ENCODE measurements at regions of chr3 and their contacts with region 1.

Region 1: DNA sequence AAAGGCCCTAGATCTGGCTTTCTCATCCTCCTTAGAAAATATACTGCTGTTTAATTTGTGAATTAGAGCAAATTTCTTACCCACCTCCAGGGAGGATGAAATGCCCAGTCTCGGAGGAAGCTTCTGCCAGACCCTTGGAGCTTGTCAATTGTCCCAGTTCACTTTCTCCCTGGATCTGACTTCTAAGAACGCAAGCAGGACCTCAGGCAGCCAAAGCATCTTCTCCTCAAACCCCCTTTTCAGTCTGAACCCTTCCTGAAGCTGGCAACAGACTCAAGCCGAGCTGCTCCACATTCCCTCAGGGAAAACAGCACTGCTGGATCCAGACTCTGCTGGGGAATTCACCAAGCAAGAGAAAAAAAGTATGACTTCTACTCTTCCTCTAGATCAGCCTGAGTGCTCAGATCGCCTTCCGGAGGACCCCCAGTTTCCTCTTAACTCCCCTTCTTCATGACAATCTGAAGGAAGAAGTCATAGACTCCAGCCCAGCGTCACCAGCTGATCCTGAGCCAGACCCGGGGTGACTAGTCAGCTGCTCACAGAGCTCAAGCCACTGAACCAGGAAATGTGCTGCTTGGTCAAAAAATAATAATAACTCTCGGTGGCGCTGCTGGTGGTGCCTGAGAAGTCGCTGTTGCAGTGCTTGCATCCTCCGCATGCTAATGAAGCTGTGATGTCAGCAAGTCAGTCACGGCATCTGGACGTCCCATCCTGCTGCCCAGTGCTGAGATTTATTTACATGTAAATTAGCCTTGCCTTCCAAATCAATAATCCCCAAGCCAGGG is at the start of gene PRICKLE2:
- DNase-seq: peak; percentile 75 to 89
- ATAC-seq: peak; percentile 75 to 88 (median 84)
- H3K4me3 ChIP-seq: peak within 1 kb of the TSS in 9 of 10 donors; percentile 6 to 54 (median 47)
- H3K27ac ChIP-seq: peak within 1 kb of the TSS; percentile 27 to 89 (median 78)
- H3K4me1 ChIP-seq: peaks cover 11 to 80% (median 59%) of the 10 kb centered on the region in 9 donors
- H3K27me3 ChIP-seq: no peaks in the 10 kb centered on the region
- CTCF ChIP-seq: peak in 5 of 9 donors; percentile 16 to 54 (median 39)
- total RNA-seq, gene PRICKLE2: 6.4 to 12.2 (median 8.4) TPM

Region 2: GRCh38 chr3:64150623-64151207 is 74.3 kb before region 1 on chr3:
- intact Hi-C with region 1: loop called in 2 of 10 experiments (anchors 5 kb)
- DNase-seq: peak; percentile 65 to 67
- ATAC-seq: peak; percentile 91 to 97 (median 96)
- H3K4me3 ChIP-seq: no peak overlapping the region
- H3K27ac ChIP-seq: peak overlapping the region; percentile 41 to 82 (median 68)
- H3K4me1 ChIP-seq: peaks cover 13 to 44% (median 30%) of the 10 kb centered on the region in 9 donors
- H3K27me3 ChIP-seq: no peaks in the 10 kb centered on the region
- CTCF ChIP-seq: no peak

Measured in heart right ventricle (tissue), 16 donors.